ENCODE measurements at regions of chrX and their contacts with region 1.

Region 1: DNA sequence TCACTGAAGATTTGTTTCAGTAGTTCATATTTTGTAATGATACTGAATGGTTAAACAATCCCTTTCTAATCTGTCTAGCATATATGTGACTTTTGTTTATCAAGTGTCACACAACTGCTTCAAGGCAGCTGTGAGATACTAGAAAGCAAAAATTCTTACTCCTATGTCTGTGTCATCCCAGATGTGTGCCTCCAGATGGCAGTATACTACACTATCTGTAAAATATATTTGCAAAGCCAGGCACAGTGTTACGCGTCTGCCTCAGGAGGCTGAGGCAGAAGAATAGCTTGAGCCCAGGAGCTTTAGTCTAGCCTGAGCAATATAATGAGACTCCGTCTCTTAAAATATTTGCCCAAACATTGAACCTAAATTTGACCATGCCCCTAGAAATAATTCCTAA is 4.0 kb downstream of the NUDT10 start:
- DNase-seq: peak; percentile 32
- H3K4me3 Mint-ChIP-seq: no peak overlapping the region
- H3K27ac Mint-ChIP-seq: no peak overlapping the region
- H3K4me1 Mint-ChIP-seq: peaks cover 2% of the 10 kb centered on the region
- H3K27me3 Mint-ChIP-seq: peaks cover 4% of the 10 kb centered on the region

Region 2: DNA sequence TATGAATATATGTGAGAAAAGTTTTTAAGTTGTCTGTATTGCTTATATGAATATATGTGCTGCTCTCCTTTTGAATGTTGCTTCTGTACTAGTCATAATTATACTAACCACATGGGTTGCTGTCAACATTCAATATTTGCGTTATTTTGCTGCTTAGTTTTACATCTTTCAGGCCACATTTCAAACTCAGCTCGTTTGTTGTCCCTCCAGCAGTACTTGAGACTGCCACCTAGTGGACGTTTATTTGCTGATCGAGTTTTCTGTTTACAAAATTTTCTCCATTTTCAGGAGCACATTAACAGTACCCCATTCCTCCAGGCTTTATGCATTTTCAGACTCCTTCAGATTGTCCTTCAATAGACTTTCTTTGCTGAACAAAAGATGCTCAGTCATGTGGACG is 84.0 kb after region 1 on chrX:
- CTCF ChIA-PET with region 1: interaction called, 42 read pairs
- DNase-seq: peak; percentile 43
- H3K4me3 Mint-ChIP-seq: no peak overlapping the region
- H3K27ac Mint-ChIP-seq: no peak overlapping the region
- H3K4me1 Mint-ChIP-seq: no peaks in the 10 kb centered on the region
- H3K27me3 Mint-ChIP-seq: no peaks in the 10 kb centered on the region

Region 3: DNA sequence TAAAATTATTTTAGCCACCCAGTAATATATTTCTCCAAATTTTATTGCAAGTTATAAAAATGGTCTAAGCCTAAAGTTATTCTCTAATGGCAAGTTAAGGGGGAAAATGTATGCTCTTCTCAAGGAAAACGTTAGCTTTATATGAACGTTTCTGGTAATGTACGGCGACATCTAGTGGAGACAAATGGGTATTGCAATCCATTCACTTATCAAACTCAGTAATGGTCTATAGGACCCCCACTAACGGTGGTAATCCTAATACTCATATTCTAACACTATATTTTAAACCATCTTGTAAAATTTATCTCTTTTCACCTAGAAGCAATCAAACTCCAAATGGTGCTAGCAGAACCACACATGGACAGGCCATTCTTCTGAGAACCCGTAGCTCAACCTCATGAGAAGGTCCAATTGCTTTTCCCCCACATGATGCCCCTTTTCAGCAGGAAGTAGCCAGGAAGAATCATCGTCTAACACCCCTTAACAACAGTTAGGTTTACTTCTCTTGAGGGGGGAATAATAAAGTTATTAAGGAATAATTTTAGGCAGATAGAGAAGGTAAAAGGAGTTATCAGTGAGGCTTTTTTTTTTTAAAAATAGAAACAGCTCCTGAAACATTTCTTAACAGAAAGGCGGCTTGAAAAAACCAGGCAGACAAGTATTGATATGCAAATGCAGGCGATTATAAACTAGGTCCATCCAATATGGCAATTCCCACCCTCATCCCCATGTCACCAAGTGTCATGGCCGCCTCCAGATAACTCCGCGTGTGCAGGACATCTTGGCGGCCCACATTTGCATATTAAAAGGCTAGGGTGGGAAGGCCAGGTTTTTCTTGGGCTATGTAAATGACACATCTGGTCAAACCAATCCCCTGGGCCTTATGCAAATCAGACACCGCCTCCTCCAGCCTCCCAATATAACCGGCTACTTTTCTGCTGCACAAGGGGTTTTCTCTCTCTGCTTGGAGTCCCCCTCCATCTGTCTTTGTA is 124.8 kb after region 1 on chrX:
- CTCF ChIA-PET with region 1: interaction called, 11 read pairs
- DNase-seq: peak; percentile 22
- H3K4me3 Mint-ChIP-seq: no peak overlapping the region
- H3K27ac Mint-ChIP-seq: no peak overlapping the region
- H3K4me1 Mint-ChIP-seq: no peaks in the 10 kb centered on the region
- H3K27me3 Mint-ChIP-seq: no peaks in the 10 kb centered on the region

Measured in activated naive CD4-positive, alpha-beta T cell treated with anti-CD3 and anti-CD28 coated beads, Interleukin-2, amount 10 ng/mL, durations not matched to agents 7 days and 5 days (primary cell).